CD4-positive, alpha-beta memory T cell (primary cell): ENCODE measurements at regions of chr18 and their contacts with region 1.

Region 1: DNA sequence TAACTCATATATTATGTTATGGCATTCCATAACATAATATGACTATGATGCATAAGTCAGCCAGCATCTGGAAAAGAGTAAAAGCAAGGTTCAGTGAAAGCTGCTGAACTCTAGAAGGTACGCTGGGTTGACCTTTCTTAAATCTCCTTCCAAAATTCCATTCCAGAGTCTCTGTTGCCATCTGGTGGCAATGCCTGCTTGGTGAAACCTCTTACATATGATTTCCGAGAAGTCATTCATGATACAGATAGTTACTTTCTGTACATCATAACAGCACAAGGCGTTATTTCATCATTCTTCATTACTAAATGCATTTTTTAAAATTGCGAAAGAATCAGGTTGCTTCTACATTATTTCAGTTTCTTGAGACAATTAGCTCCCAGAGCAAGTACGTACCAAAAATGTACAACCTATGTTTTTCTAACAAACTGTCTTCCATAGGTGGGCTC is 7.0 kb upstream of the EPG5 start:
- DNase-seq: peak; percentile 60 to 80 (median 66)
- H3K4me3 ChIP-seq: no peak overlapping the region
- H3K4me3 Mint-ChIP-seq: peak overlapping the region in 3 of 8 donors; percentile 0 to 34 (median 1)
- H3K27ac ChIP-seq: no peak overlapping the region
- H3K27ac Mint-ChIP-seq: no peak overlapping the region
- H3K4me1 ChIP-seq: peaks cover 8% of the 10 kb centered on the region
- H3K4me1 Mint-ChIP-seq: peaks cover 8 to 18% (median 10%) of the 10 kb centered on the region in 4 donors
- H3K27me3 ChIP-seq: no peaks in the 10 kb centered on the region
- H3K27me3 Mint-ChIP-seq: no peaks in the 10 kb centered on the region

Region 2: DNA sequence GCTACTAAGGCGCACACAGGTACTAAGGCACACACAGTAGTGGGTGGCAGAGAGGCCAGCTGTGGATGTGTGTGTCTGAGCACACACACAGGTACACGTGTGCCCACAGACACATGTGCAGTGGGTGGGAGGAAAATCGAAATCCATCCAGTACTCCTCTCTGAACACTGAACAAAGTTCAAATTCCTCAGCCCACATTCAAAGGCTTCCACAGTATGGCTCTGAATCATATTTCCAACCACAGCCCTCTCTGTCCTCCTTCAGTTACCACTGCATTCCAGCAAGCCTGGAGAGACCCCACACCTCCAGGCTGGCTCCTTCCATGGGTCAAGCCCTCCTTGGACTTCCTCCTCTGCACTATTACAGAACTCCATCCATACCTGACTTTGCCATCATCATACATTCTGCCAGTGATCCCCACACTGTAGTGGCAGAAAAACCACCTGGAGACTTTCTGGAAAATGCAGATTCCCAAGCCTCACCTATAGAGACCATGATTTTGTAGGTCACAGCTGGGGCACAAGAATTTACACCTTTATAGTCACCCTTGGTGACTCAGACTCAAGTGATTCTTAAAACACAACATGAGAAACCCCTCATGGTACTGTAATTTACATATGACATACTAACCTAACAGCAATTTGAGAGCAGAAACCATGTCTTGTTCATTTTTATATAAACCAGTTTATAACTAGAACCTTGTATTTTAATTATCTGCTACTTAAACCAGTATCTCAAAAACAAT is 38.3 kb before region 1 on chr18:
- CTCF ChIA-PET with region 1: interaction called, 3 read pairs
- POLR2A ChIA-PET with region 1: no interaction called
- intact Hi-C with region 1: loop called (anchors 5 kb)
- DNase-seq: no peak
- H3K4me3 ChIP-seq: no peak overlapping the region
- H3K4me3 Mint-ChIP-seq: no peak overlapping the region
- H3K27ac ChIP-seq: no peak overlapping the region
- H3K27ac Mint-ChIP-seq: peak overlapping the region in 1 of 7 donors; percentile 19
- H3K4me1 ChIP-seq: peaks cover 21% of the 10 kb centered on the region
- H3K4me1 Mint-ChIP-seq: peaks cover 19 to 25% (median 23%) of the 10 kb centered on the region in 4 donors
- H3K27me3 ChIP-seq: no peaks in the 10 kb centered on the region
- H3K27me3 Mint-ChIP-seq: no peaks in the 10 kb centered on the region